ENCODE measurements at regions of chr4 and their contacts with region 1.

Region 1: DNA sequence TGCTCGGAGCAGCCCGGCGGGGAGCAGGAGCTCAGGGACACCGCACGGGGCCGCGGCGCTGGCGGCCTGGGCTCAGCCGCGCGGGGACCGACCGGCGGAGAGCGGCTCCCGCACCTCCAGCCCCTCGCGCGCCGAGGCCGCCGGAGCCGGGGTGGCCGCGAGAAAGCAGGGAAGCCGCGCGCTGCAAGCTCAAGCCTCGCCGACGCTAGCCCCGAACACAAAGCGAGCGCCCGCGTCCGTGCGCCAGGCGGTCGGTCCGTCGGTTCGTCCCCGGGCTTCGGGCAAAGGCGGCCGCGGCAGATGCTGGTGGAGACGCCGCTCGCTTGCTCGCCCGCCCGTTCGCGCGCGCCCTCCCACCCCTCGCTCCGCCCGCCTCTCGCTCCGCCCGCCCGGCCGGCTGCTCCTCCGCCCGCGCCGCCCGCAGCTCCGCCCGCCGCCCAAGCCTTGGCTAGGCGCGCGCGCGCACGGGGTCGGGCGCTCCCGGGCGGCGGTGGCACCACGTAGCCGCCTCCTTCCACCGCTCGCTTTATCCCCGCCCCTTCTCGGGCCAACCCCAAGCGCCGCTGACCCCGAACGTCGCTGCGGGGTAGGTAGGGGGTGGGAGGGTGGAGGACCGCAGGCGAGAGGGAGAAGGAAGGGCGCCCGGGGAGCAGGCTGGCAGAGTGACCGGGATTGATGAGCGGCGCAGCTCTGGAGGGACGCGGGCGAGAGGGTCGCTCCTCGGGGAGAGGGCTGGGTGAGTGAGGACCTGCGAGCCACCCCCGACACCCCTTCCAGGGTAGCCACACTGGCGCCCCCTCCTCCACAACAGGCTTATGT is at the start of gene TSPAN5:
- DNase-seq: peak; percentile 86 to 88
- H3K4me3 ChIP-seq: peak within 1 kb of the TSS; percentile 13 to 76 (median 71)
- H3K27ac ChIP-seq: peak within 1 kb of the TSS; percentile 31 to 75 (median 62)
- H3K4me1 ChIP-seq: peaks cover 28 to 39% of the 10 kb centered on the region in 2 donors
- H3K27me3 ChIP-seq: no peaks in the 10 kb centered on the region
- CTCF ChIP-seq: no peak
- POLR2A ChIP-seq: peak in 1 of 2 donors; percentile 84
- total RNA-seq, gene TSPAN5: 26.4 to 48.0 (median 29.1) TPM

Region 2: GRCh38 chr4:98433691-98434090 is 224.8 kb before region 1 on chr4:
- intact Hi-C with region 1: no loop called
- DNase-seq: no peak
- H3K4me3 ChIP-seq: no peak overlapping the region
- H3K27ac ChIP-seq: no peak overlapping the region
- H3K4me1 ChIP-seq: no peaks in the 10 kb centered on the region
- H3K27me3 ChIP-seq: no peaks in the 10 kb centered on the region
- CTCF ChIP-seq: no peak
- POLR2A ChIP-seq: no peak

Region 3: GRCh38 chr4:98474408-98474844 is 184.1 kb before region 1 on chr4:
- intact Hi-C with region 1: loop called (anchors 10 kb)
- DNase-seq: peak; percentile 79
- H3K4me3 ChIP-seq: no peak overlapping the region
- H3K27ac ChIP-seq: peak overlapping the region; percentile 50 to 89 (median 86)
- H3K4me1 ChIP-seq: peaks cover 14 to 15% of the 10 kb centered on the region in 2 donors
- H3K27me3 ChIP-seq: no peaks in the 10 kb centered on the region
- CTCF ChIP-seq: no peak
- POLR2A ChIP-seq: peak in 1 of 2 donors; percentile 13